A549 (cell line): ENCODE measurements at regions of chr9 and their contacts with region 1.

Region 1: GRCh38 chr9:125241000-125241862 is at the start of gene HSPA5:
- DNase-seq: peak; percentile 99
- ATAC-seq: peak; percentile 91 to 95
- H3K4me3 ChIP-seq: peak within 1 kb of the TSS; percentile 73
- H3K27ac ChIP-seq: peak within 1 kb of the TSS; percentile 92 to 98
- H3K4me1 ChIP-seq: peaks cover 57% of the 10 kb centered on the region
- CTCF ChIP-seq: no peak
- EP300 ChIP-seq: no peak
- POLR2A ChIP-seq: peak; percentile 99
- RAD21 ChIP-seq: no peak
- polyA plus RNA-seq, gene HSPA5: 437 and 557 TPM in 2 replicates

Region 2: DNA sequence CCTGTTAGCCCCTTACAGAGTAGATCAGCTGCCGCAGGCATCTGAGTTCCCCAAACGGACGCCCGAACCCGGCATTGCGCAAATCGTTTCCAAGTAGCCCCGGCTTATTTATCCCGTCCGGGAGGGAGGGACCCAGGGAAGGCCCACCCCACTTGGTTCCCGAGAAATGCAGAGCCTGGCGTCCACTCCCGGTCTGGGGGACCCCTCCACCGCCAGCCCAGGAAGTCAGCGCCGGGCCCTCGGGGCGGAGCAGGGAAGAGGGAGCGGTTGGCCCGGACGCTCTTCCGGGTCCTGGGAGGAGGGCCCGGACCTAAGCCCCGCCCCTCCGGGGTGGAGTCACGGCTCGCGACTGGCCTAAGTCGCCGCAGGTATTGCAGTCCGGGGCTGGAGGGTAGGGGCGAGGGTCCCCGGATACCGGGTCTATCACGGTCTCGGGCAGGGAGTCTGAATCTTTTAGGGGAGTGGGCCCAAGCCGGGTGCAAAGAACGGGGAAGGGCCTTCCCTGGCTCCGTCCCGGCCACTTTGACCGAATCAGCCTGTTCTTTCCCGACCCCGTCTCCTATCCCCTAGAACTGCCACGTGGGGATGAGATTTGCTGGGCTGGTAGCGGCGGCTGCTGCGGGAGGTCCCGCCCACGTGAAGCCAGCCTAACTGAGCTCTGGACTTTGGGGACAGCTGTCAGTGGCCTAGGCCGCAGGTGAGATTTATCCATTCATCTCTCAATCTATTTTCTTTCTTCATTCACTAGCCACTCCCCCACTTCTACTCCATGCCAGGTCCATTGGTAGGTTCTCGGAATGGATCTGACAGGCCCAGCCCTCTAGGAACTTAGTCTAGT is 40.8 kb before region 1 on chr9 and contains the start of gene RABEPK:
- CTCF ChIA-PET with region 1: no interaction called
- POLR2A ChIA-PET with region 1: interaction called, 38 read pairs
- DNase-seq: peak; percentile 93 to 94
- ATAC-seq: peak; percentile 99
- H3K4me3 ChIP-seq: peak within 1 kb of the TSS; percentile 62
- H3K27ac ChIP-seq: peak within 1 kb of the TSS; percentile 86 to 90
- H3K4me1 ChIP-seq: peaks cover 16% of the 10 kb centered on the region
- CTCF ChIP-seq: no peak
- EP300 ChIP-seq: no peak
- POLR2A ChIP-seq: peak; percentile 81
- RAD21 ChIP-seq: peak in 1 of 2 experiments; percentile 1; a peak in 1 of 5 replicates
- polyA plus RNA-seq, gene RABEPK: 50.1 and 53.5 TPM in 2 replicates

Region 3: GRCh38 chr9:125227761-125228160 is 13.5 kb before region 1 on chr9:
- CTCF ChIA-PET with region 1: interaction called, 3 read pairs
- POLR2A ChIA-PET with region 1: interaction called, 30 read pairs
- DNase-seq: no peak
- ATAC-seq: no peak
- H3K4me3 ChIP-seq: no peak overlapping the region
- H3K27ac ChIP-seq: no peak overlapping the region
- H3K4me1 ChIP-seq: no peaks in the 10 kb centered on the region
- CTCF ChIP-seq: no peak
- EP300 ChIP-seq: no peak
- POLR2A ChIP-seq: no peak
- RAD21 ChIP-seq: no peak

Region 4: DNA sequence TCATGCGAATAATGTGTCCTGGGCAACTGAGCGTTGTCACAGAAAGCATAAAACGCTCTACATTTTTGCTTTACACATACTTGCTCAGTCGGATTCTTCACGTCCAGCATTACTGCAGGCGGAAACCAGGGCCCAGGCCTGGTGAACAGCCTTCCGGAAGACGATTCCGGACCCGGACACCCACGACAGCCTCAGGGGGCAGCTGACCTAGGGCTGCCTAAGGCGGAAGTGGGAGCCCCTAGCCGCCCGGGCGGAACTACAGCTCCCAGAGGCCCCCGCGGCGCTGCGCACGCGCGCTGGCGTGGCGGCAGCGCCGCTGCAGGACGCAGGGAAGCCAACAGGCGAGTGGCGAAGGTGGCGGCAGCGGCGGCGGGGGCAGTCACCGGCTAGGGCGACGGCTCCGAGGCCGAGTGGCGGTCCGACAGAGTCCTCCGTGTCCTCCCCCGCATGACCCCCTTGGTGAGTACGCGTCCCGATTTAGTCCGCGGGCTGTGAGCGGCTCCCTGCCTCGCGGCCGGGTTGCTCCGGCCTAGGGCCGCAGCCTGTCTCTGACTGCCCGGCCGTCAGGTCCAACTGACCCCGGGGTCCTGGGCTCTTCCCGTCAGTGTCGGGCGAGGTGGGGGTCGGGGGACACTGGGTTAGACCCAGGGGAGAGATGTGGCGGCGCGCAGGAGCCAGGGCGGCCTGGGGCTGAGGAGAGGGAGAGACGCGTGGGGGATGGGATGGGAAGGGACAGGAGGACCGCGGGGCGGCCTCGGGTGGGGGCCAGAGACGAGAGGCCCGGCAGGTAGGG is 20.5 kb after region 1 on chr9 and contains the start of gene GAPVD1:
- CTCF ChIA-PET with region 1: interaction called, 9 read pairs
- POLR2A ChIA-PET with region 1: interaction called, 38 read pairs
- DNase-seq: peak; percentile 92 to 98
- ATAC-seq: peak; percentile 98 to 99
- H3K4me3 ChIP-seq: peak within 1 kb of the TSS; percentile 98
- H3K27ac ChIP-seq: peak within 1 kb of the TSS; percentile 90 to 94
- H3K4me1 ChIP-seq: peaks cover 11% of the 10 kb centered on the region; the same call in 1 of the 3 replicates
- CTCF ChIP-seq: peak; percentile 30
- EP300 ChIP-seq: no peak
- POLR2A ChIP-seq: peak; percentile 48
- RAD21 ChIP-seq: no peak
- polyA plus RNA-seq, gene GAPVD1: 23.0 and 26.1 TPM in 2 replicates

Region 5: GRCh38 chr9:125293134-125293533 is 51.9 kb after region 1 on chr9:
- CTCF ChIA-PET with region 1: no interaction called
- POLR2A ChIA-PET with region 1: interaction called, 12 read pairs
- DNase-seq: no peak
- ATAC-seq: no peak
- H3K4me3 ChIP-seq: no peak overlapping the region
- H3K27ac ChIP-seq: no peak overlapping the region
- H3K4me1 ChIP-seq: peaks cover 17% of the 10 kb centered on the region
- CTCF ChIP-seq: no peak
- EP300 ChIP-seq: no peak
- POLR2A ChIP-seq: no peak
- RAD21 ChIP-seq: no peak

Region 6: DNA sequence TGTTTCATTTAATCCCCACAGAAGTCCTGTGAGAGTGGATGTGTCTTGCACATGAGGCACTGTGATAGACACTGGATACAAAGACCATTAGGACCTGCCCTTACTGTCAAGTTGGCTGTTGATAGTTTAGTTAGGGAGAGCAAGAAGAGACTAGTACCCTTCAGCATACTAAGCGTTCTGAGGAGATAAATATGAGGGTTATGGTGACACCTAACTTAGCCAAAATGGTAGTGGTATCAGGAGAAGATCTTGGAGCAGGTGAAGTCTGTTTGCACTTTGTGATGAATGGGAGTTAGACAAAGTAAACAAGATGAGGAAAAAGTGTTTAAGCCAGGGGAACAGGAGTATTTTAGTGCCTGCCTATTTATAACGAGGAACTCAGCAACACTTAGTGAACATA is 67.5 kb after region 1 on chr9:
- CTCF ChIA-PET with region 1: no interaction called
- POLR2A ChIA-PET with region 1: no interaction called
- DNase-seq: no peak
- ATAC-seq: no peak
- H3K4me3 ChIP-seq: no peak overlapping the region
- H3K27ac ChIP-seq: no peak overlapping the region
- H3K4me1 ChIP-seq: no peaks in the 10 kb centered on the region
- CTCF ChIP-seq: no peak
- EP300 ChIP-seq: no peak
- POLR2A ChIP-seq: no peak
- RAD21 ChIP-seq: no peak